AG04449 (cell line): ENCODE measurements at regions of chr5 and their contacts with region 1.

Region 1: GRCh38 chr5:134289509-134290113 is 63.7 kb upstream of the PPP2CA start:
- DNase-seq: peak; percentile 26
- H3K4me3 ChIP-seq: no peak overlapping the region
- CTCF ChIP-seq: peak; percentile 65

Region 2: GRCh38 chr5:134145779-134146581 is 143.6 kb before region 1 on chr5:
- CTCF ChIA-PET with region 1: interaction called, 26 read pairs
- POLR2A ChIA-PET with region 1: no interaction called
- DNase-seq: no peak
- H3K4me3 ChIP-seq: no peak overlapping the region
- CTCF ChIP-seq: peak; percentile 89

Region 3: GRCh38 chr5:134184155-134185135 is 105.2 kb before region 1 on chr5:
- CTCF ChIA-PET with region 1: interaction called, 440 read pairs
- POLR2A ChIA-PET with region 1: no interaction called
- DNase-seq: no peak
- H3K4me3 ChIP-seq: no peak overlapping the region
- CTCF ChIP-seq: peak; percentile 92

Region 4: DNA sequence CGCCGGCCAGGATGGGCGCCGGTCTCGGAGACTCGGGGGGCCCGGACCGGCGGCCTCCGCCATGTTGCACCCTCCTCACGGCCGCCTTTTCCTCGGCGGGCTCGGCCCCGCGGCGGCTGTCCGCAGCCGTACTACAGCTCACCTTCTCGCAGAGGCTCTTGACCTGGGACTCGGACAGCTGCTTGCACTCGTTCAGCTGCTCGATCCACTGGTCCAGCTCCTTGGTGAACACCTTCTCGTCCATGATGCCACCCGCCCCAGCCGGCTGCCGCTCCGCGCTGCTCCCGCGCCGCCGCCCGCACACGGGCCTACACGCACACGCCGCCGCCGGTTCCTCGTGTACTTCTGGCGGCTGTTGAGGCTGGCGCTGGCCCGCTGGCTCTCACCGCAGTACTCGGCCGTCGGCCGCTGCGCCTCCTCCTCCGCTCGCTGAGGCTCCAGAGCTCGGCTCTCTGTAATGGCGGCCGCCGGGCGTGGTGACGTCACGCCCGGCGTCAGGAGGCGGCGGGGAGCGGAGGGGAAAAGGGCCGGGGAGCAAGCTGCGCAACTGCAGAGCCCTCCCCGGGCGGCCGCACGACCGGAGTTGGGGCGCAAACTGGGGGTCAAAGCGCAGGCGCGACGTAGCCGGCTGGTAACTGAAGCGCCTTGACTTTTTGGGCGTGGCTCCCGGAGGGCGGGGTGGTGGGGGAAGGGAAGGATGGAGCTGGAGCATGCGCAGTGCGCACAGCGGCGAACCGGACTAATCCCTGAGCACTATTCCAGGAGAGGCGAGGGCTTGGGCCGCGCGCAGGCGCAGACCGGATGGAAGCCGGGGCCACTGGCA is 63.8 kb before region 1 on chr5 and contains the start of gene PPP2CA:
- CTCF ChIA-PET with region 1: interaction called, 10 read pairs
- POLR2A ChIA-PET with region 1: interaction called, 5 read pairs
- DNase-seq: peak; percentile 90
- H3K4me3 ChIP-seq: peak within 1 kb of the TSS; percentile 93
- CTCF ChIP-seq: no peak

Region 5: DNA sequence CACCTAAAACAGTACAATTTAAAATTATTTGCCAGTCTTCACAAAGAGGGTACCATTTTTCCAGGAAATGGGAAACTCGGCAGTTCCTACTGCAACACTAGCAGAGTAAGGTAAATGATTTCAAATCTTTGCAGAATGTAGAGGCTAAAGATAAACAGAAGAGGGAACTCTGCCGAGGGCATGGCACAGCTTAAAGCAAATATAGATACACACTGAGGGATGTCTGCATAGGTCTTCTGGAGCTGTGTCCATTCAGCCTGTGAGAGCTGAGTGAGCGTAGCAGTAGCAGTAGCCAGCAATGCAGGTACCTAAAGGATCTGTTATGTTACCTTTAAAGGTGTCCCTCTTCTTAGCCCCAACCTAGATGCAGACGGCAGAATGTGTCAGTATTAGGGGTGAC is 59.9 kb after region 1 on chr5:
- CTCF ChIA-PET with region 1: no interaction called
- POLR2A ChIA-PET with region 1: no interaction called
- DNase-seq: no peak
- H3K4me3 ChIP-seq: no peak overlapping the region
- CTCF ChIP-seq: no peak